Adrenal gland (tissue), 19 donors: ENCODE measurements at regions of chr22 and their contacts with region 1.

Region 1: GRCh38 chr22:25110846-25111578 is 88.6 kb upstream of the CRYBB3 start:
- DNase-seq: peak; percentile 67 to 87 (median 80)
- H3K4me3 ChIP-seq: peak overlapping the region in 2 of 4 donors; percentile 20 to 58
- H3K27ac ChIP-seq: peak overlapping the region; percentile 41 to 91 (median 83)
- H3K4me1 ChIP-seq: peaks cover 44 to 47% of the 10 kb centered on the region in 2 donors
- H3K27me3 ChIP-seq: no peaks in the 10 kb centered on the region
- CTCF ChIP-seq: peak; percentile 18 to 71 (median 54)
- POLR2A ChIP-seq: peak in 1 of 2 donors; percentile 64

Region 2: DNA sequence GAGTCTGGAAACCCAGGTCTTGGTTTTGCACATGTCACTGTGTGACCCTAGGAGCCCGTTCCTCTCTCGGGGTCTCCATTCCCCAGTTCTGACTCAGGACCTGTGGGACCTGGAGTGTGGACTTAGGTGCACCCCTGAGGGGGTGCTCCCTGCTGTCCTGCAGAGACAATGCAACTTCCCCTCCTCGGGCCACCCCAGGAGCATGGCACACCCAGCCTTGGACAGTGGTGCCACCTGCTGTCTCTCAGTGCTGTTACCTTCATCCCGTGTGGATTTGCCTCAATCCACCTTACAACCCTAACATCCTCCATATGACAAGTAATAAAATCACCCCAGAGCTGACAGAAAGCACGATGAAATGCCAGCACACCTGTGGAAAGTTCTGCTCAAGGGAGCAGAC is 61.1 kb after region 1 on chr22:
- intact Hi-C with region 1: loop called in 1 of 2 experiments (anchors 2 kb)
- DNase-seq: peak in 2 of 7 donors; percentile 44 to 47
- H3K4me3 ChIP-seq: no peak overlapping the region
- H3K27ac ChIP-seq: no peak overlapping the region
- H3K4me1 ChIP-seq: peaks cover 0 to 11% of the 10 kb centered on the region in 2 donors
- H3K27me3 ChIP-seq: no peaks in the 10 kb centered on the region
- CTCF ChIP-seq: peak in 5 of 6 experiments; percentile 25 to 54 (median 53)
- POLR2A ChIP-seq: no peak